Heart right ventricle (tissue), 16 donors: ENCODE measurements at regions of chr1 and their contacts with region 1.

Region 1: DNA sequence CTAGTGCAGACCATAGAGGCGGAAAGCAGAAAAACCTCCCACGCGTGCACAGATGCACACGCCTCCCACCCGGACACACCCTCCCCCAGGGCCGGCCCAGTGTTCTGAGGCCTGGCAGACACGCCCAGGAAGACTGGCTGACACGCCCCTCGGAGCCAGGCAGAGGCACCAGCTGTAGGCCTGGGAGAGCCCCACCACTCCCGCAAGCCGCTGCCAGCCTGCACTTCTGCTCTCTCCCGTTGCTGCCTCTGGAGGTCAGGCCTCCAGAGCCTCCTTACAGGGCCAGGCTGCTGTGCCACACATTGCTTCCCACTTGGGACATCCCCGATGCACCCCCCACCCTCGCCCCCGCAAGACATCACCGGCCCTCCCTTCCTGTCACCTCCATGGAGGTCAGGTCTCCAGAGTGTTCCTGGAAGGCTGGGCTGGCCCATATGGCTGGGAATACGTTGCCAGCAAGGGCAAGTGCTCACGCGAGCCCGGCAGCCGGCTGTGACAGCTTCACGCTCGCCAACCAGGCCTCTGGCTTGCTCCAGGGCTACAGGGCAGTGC is 40.4 kb downstream of the CASZ1 start:
- DNase-seq: peak; percentile 71 to 74
- ATAC-seq: peak; percentile 82 to 92 (median 88)
- H3K4me3 ChIP-seq: peak overlapping the region in 1 of 10 donors; percentile 16
- H3K27ac ChIP-seq: peak overlapping the region in 9 of 10 donors; percentile 1 to 81 (median 65)
- H3K4me1 ChIP-seq: peaks cover 14 to 72% (median 59%) of the 10 kb centered on the region in 9 donors
- H3K27me3 ChIP-seq: no peaks in the 10 kb centered on the region
- CTCF ChIP-seq: no peak

Region 2: GRCh38 chr1:10714337-10715114 is 41.5 kb before region 1 on chr1:
- intact Hi-C with region 1: loop called in 1 of 10 experiments (anchors 5 kb)
- DNase-seq: peak; percentile 60 to 75
- ATAC-seq: peak; percentile 38 to 81 (median 76)
- H3K4me3 ChIP-seq: no peak overlapping the region
- H3K27ac ChIP-seq: peak overlapping the region in 9 of 10 donors; percentile 21 to 91 (median 71)
- H3K4me1 ChIP-seq: peaks cover 24 to 86% (median 59%) of the 10 kb centered on the region in 9 donors
- H3K27me3 ChIP-seq: peaks cover 0 to 2% (median 0%) of the 10 kb centered on the region in 7 donors
- CTCF ChIP-seq: no peak

Region 3: DNA sequence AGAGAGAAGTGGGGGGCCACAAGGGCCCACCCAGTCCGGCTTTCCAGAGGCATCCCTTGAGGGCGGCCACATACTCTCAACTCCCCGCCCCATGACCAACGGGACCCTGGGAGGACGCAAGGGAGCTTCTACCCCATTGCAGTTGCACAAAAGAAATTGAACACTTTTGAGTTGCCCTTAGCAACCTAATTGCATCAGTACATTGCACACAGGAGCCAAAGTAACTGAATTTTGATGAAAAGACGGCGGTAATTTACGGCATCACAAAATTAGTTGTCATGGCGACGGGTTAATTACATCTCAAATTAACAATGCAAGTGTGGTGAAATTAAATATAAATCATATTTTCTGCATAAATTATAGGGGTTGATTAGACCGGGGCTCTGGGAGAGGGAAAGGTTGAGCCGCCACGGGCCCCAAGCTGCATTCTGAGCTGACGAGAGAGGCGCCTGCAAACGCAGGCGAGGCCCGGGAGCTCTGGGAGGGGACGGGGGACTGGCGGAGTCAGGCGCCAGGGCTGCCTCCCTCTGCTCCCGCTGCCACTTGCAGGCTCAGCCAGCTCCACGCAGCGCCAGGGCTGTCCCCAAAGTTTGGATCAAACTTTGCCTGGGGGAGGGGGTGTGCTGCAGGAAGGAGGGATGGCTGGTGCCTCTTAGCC is 21.0 kb before region 1 on chr1:
- intact Hi-C with region 1: loop called in 1 of 10 experiments (anchors 2 kb)
- DNase-seq: peak in 1 of 2 donors; percentile 63
- ATAC-seq: peak; percentile 47 to 76 (median 67)
- H3K4me3 ChIP-seq: no peak overlapping the region
- H3K27ac ChIP-seq: peak overlapping the region in 7 of 10 donors; percentile 13 to 81 (median 62)
- H3K4me1 ChIP-seq: peaks cover 16 to 90% (median 56%) of the 10 kb centered on the region in 9 donors
- H3K27me3 ChIP-seq: no peaks in the 10 kb centered on the region
- CTCF ChIP-seq: no peak